A549 (cell line): ENCODE measurements at regions of chr20 and their contacts with region 1.

Region 1: DNA sequence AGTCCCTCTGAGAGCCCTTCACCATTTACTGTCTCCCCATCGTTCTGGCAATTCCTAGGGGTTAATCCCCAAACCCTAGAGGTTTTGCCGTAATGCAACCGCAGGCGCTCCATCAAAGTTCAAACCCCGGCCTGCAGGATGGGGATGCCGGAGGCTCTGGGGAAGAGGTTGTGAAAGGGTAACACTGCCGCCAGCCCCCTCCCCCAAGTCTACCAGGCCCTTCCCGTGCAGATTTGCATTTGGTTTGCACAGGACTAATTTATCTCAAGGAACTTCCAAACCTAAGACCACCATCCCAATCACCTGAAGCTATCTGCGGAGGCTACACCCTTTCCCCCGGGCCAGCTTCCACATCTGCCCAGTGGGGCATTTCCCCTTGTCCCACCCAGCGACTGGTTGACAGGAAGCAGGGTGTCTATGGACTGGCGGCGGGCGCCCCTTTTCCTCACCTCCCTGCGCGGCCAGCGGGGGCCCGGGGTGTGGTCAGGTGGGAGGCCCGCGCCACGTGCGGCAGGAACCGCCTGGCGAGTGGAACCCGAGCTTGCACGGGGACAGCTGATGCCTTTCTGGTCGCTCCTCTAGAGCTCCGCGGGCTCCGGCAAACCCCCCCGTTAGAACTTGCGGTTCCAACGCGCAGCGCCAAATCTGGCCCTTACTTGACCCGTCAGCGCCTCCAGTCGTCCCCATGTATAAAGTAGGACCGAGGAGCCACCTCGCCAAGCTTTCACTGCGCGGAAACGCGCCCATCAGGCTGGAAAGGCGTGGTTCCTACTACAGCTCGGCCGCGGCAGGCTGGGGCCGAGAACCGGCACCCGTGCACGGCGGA is 9.4 kb upstream of the SLC4A11 start:
- DNase-seq: no peak
- ATAC-seq: no peak
- H3K4me3 ChIP-seq: no peak overlapping the region
- H3K27ac ChIP-seq: no peak overlapping the region
- H3K4me1 ChIP-seq: peaks cover 8% of the 10 kb centered on the region; the same call in 1 of the 3 replicates
- CTCF ChIP-seq: no peak
- EP300 ChIP-seq: no peak
- POLR2A ChIP-seq: no peak
- RAD21 ChIP-seq: no peak

Region 2: DNA sequence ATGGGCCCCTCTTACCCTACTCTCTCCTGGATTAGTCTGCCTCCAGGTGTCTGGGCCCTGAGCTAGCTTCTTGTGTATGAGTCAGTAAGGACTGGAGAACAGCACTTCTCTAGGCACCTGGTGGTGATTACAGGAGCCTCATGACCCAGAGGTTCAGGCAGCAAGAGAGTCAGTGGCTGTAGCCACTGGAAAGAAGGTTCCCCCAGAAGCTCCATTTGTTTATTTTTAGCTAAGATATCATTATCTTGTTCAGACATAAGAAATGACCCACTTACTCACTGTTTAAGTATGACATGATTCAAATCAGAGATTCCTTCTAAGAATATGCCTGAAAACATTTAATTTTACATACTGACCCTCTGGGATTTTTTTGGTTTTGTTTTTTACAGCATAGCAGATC is 14.2 kb after region 1 on chr20:
- CTCF ChIA-PET with region 1: interaction called, 11 read pairs
- POLR2A ChIA-PET with region 1: no interaction called
- DNase-seq: no peak
- ATAC-seq: no peak
- H3K4me3 ChIP-seq: no peak overlapping the region
- H3K27ac ChIP-seq: no peak overlapping the region
- H3K4me1 ChIP-seq: no peaks in the 10 kb centered on the region
- CTCF ChIP-seq: no peak
- EP300 ChIP-seq: no peak
- POLR2A ChIP-seq: no peak
- RAD21 ChIP-seq: no peak

Region 3: DNA sequence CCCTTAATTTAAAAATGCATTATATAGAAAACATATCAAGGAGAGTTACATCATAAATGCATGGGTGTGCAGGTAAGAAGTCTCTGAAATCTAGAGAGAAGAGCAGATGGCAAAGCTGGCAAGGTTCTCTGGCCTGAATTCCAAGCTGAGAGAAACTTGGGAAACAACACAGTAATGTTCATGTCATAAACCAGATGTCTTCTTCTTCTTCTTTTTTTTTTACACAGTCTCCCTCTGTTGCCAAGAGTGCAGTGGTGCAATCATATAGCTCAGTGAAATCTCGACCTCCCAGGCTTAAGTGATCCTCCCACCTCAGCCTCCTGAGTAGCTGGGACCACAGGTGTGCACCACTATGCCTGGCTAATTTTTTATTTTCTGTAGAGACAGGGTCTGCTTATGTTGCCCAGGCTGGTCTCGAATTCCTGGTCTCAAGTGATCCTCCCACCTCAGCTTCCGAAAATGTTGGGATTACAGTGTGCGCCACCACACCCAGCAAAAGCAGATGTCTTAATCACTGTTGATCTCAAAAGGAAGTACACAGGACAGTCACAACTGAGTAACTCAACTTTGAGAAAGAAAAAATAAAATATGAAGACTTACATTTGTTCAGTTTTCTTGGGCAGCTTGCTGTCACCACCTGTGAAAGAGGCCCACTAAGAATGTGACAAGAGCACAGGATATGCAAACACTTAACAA is 81.8 kb after region 1 on chr20:
- CTCF ChIA-PET with region 1: no interaction called
- POLR2A ChIA-PET with region 1: no interaction called
- DNase-seq: peak in 1 of 2 experiments; percentile 27
- ATAC-seq: peak; percentile 70 to 76; a peak in 4 of 6 replicates
- H3K4me3 ChIP-seq: no peak overlapping the region
- H3K27ac ChIP-seq: no peak overlapping the region
- H3K4me1 ChIP-seq: no peaks in the 10 kb centered on the region
- CTCF ChIP-seq: peak; percentile 9; the same call in 1 of the 3 replicates
- EP300 ChIP-seq: no peak
- POLR2A ChIP-seq: no peak
- RAD21 ChIP-seq: no peak